Mucosa of descending colon (tissue), 3 donors: ENCODE measurements at regions of chr20 and their contacts with region 1.

Region 1: DNA sequence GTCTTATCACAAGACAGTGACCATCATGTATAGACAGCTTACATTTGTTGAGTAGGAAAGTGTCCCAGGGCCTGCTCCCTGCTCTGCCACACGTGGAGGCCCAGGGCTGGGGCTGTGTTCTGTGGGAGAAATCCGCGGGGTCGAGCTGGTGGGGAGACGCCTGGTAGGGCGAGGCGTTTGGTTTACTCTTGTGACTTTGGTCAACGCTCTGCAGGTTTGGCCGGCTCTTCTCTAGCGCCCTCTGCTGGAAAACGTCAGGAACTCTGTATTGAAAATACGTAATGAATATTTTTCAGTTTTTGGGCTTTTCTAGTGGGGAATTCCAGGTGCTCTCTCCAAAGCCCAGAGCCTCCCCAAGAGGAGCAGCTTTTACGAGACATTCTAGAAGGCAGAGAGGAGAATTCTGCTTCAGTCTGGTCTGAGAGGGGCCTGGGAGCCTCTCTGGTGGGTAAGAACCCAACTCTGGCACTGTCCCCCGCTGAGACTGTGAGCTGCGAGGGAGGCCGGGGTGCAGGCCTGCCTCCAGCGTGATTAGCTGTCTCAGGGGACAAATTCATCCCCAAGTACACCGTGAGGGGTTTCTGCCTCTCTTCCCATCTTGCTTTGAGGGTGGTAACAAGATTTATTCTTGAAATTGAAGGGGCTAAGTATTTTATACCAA is 112.6 kb upstream of the RALGAPA2 start:
- DNase-seq: peak; percentile 60 to 68 (median 64)
- ATAC-seq: peak; percentile 85
- H3K4me3 ChIP-seq: no peak overlapping the region
- H3K4me1 ChIP-seq: no peaks in the 10 kb centered on the region
- CTCF ChIP-seq: peak; percentile 42

Region 2: GRCh38 chr20:20593447-20594170 is 231.4 kb before region 1 on chr20:
- intact Hi-C with region 1: no loop called
- DNase-seq: peak in 1 of 3 donors; percentile 35
- ATAC-seq: peak; percentile 47
- H3K4me3 ChIP-seq: no peak overlapping the region
- H3K4me1 ChIP-seq: no peaks in the 10 kb centered on the region
- CTCF ChIP-seq: no peak

Region 3: GRCh38 chr20:20664795-20665589 is 160.1 kb before region 1 on chr20:
- intact Hi-C with region 1: loop called in 1 of 2 experiments (anchors 2 kb)
- DNase-seq: peak in 1 of 3 donors; percentile 37
- ATAC-seq: peak; percentile 79
- H3K4me3 ChIP-seq: no peak overlapping the region
- H3K4me1 ChIP-seq: no peaks in the 10 kb centered on the region
- CTCF ChIP-seq: no peak

Region 4: GRCh38 chr20:20721369-20721888 is 103.6 kb before region 1 on chr20:
- intact Hi-C with region 1: no loop called
- DNase-seq: no peak
- ATAC-seq: no peak
- H3K4me3 ChIP-seq: no peak overlapping the region
- H3K4me1 ChIP-seq: no peaks in the 10 kb centered on the region
- CTCF ChIP-seq: no peak